Endothelial cell of umbilical vein (primary cell): ENCODE measurements at regions of chr2 and their contacts with region 1.

Region 1: DNA sequence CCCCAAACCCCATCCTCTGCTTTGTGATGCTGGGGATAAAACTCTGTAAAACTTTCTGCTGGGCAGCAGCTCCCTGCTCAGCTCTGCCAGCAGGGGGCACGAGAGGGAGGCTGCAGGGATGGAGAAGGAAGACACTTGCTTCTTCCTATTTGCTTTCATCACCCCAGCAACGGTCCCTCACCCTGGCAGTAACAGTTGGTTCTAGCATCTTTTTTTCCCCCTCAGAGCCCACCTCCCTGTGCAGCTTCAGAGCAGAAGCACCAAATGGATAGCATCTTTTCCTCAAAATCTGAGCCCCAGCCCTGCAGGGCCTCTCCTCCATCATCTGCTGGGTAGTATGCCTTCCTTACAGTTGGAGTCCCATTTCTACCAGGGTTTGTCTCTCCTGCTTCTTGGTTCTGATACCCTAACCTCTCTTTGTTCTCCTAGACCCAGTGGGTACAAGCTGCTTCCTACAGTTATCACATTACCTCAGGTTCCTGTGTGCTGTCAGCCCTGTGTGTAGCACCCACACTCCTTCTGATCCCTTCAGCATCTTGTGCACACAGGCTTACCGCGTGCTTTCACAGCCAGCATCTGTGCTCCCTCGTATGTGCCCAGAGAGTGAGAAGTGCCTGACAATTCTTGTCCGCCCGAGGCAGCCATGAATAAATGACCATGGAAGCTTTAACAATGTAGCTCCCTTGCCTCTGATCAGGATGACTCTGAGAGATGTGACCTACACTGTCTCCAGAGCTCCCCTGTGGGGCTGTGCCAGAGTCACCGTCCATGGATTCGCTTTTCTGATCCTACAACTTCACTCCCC is 14.5 kb downstream of the CKAP2L start:
- DNase-seq: peak; percentile 67
- H3K4me3 ChIP-seq: no peak overlapping the region
- H3K27ac ChIP-seq: peak overlapping the region; percentile 28
- H3K4me1 ChIP-seq: no peaks in the 10 kb centered on the region
- H3K27me3 ChIP-seq: no peaks in the 10 kb centered on the region
- CTCF ChIP-seq: peak; percentile 91 to 96
- POLR2A ChIP-seq: no peak

Region 2: GRCh38 chr2:112737542-112738232 is 12.3 kb before region 1 on chr2:
- CTCF ChIA-PET with region 1: interaction called, 14 read pairs
- POLR2A ChIA-PET with region 1: no interaction called
- dilution Hi-C with region 1: no loop called
- intact Hi-C with region 1: no loop called
- DNase-seq: no peak
- H3K4me3 ChIP-seq: no peak overlapping the region
- H3K27ac ChIP-seq: no peak overlapping the region
- H3K4me1 ChIP-seq: no peaks in the 10 kb centered on the region
- H3K27me3 ChIP-seq: no peaks in the 10 kb centered on the region
- CTCF ChIP-seq: no peak
- POLR2A ChIP-seq: no peak

Region 3: DNA sequence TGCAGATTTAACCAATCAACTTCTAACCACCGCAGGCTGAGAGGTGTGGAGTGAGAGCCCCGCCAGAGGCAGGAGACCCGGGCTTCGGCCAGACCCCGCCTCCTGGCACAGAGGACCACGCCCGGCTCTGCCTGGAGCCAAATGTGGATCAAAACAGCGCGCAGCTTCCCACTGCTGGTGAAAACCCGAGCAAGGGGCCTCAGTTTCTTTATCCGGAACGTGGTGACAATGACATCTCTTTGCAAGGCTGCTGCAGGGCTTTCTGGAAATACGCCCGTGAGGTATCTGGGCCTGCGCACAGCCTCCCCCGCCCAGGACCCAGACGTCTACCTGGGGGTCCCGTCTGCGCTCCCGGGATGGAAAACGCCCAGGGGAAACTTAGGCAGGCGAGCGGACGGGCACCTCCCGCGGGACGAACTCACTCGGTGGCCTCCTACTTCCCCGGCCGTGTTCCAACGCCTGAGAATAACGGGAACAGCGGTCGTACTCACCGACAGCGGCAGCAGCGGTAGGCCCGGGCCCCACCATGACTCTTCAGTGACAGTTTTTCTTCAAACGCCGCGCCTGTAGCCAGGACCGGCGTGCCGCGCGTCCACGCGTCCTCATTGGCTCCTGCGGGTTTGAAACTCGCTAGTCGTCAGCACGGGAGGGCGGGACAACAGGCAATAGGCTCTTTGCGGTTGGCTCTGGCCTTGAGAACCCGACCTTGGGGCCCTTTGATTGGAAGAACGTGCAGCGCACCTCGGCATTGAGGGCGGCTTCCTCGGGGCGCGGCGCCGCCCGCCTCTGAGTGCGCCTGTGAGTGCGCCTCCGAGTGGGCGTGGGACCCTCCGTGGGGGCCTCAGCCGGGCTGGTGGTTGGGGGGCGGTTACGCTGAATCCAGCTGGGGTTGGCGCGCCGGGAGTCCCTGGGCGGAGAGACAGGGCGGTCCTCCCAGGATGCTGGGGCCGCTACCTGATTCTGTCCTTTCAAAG is 14.4 kb after region 1 on chr2 and contains the start of gene CKAP2L:
- CTCF ChIA-PET with region 1: interaction called, 27 read pairs
- POLR2A ChIA-PET with region 1: no interaction called
- dilution Hi-C with region 1: no loop called
- intact Hi-C with region 1: loop called (anchors 2 kb)
- DNase-seq: peak; percentile 98
- H3K4me3 ChIP-seq: peak within 1 kb of the TSS; percentile 78 to 90 (median 87)
- H3K27ac ChIP-seq: peak within 1 kb of the TSS; percentile 34
- H3K4me1 ChIP-seq: peaks cover 21% of the 10 kb centered on the region
- H3K27me3 ChIP-seq: no peaks in the 10 kb centered on the region
- CTCF ChIP-seq: no peak
- POLR2A ChIP-seq: peak; percentile 52
- total RNA-seq, gene CKAP2L: 25.2 and 30.7 TPM in 2 replicates

Region 4: DNA sequence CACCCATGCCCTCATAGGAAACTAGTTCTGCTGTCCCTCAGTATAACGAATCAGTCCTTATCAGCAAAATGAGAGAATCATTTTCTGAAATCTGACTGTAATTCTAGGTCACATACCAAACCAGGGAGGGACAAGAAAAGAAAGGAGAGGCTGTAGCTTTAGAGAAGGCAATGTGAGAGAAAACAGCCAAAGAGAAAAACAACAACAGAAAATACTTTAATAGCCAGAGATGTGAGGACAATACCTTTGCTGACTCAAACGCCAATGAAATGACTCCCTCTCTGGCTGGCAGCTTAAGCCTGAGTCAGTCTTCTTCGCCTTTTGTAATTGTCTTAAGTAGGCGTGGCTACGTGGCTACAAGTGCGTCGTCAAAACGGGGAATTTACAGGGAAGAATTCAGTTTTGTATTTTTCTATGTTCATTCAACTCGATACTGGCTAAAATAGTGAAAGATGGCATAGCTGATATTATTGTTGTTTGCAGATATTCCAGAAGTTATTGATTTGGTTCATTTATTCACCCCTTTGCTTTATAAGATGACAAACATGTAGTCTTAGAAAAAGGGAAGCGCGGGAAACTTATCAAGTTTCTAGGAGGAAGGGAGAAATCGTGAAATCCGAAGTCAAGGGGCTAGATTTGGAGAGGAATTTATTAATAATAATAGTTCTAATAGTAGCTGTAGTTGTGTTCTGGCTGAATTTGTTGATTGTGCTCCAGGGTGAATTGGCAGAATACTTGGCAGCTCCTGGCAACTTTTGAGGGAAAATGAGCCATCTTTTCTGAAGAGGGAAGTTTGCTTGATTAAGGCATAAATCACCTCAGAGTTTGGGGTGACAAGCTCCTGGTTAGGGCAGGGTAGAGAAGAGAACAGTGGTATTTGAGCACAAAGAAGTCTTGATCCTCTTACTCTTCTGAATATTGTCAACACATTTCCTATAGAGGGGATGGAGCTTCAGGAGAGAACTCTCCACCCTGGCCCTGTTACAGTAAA is 34.5 kb after region 1 on chr2 and contains the start of gene IL1A:
- CTCF ChIA-PET with region 1: interaction called, 12 read pairs
- POLR2A ChIA-PET with region 1: no interaction called
- dilution Hi-C with region 1: no loop called
- intact Hi-C with region 1: no loop called
- DNase-seq: peak; percentile 73
- H3K4me3 ChIP-seq: peak within 1 kb of the TSS in 1 of 3 experiments; percentile 37
- H3K27ac ChIP-seq: peak within 1 kb of the TSS; percentile 73
- H3K4me1 ChIP-seq: peaks cover 43% of the 10 kb centered on the region
- H3K27me3 ChIP-seq: no peaks in the 10 kb centered on the region
- CTCF ChIP-seq: no peak
- POLR2A ChIP-seq: no peak
- total RNA-seq, gene IL1A: 0.99 and 1.4 TPM in 2 replicates

Region 5: DNA sequence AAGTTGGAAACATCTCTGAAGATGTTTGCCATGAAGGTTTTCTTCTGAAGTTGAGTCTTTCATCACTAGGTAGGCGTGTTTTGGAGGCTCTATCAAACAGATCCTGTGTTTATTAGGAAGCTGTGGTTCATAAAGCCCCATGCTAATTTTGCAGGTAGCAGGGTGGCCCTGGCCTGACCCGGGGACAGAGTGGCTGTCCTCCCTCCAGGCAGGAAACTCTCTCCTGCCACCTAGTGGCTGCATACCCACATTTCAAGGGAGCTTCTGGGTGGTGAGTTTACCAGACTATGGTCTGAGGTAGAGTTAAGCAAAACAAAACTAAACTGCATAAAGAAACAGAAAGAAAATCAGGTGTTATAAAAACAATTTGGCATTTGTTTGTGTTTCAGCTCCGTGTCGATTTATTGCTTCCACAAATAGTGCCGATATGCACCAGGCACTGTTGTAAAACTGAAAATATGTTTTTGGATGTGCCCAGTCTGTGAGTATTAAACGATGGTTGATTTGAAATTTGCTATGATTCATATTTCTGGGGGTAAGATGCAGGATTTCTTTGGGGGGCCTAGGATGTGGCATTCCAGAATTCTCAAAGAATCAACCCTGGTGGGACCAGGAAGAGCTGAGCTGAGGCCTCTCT is 135.0 kb after region 1 on chr2:
- CTCF ChIA-PET with region 1: interaction called, 218 read pairs
- POLR2A ChIA-PET with region 1: no interaction called
- dilution Hi-C with region 1: no loop called
- intact Hi-C with region 1: loop called (anchors 1 kb)
- DNase-seq: peak; percentile 38
- H3K4me3 ChIP-seq: no peak overlapping the region
- H3K27ac ChIP-seq: no peak overlapping the region
- H3K4me1 ChIP-seq: peaks cover 19% of the 10 kb centered on the region
- H3K27me3 ChIP-seq: no peaks in the 10 kb centered on the region
- CTCF ChIP-seq: peak; percentile 59 to 74
- POLR2A ChIP-seq: no peak

Region 6: GRCh38 chr2:112958428-112959108 is 208.6 kb after region 1 on chr2:
- CTCF ChIA-PET with region 1: interaction called, 39 read pairs
- POLR2A ChIA-PET with region 1: no interaction called
- dilution Hi-C with region 1: no loop called
- intact Hi-C with region 1: no loop called
- DNase-seq: peak; percentile 51
- H3K4me3 ChIP-seq: no peak overlapping the region
- H3K27ac ChIP-seq: no peak overlapping the region
- H3K4me1 ChIP-seq: no peaks in the 10 kb centered on the region
- H3K27me3 ChIP-seq: peaks cover 15 to 20% of the 10 kb centered on the region in 2 experiments
- CTCF ChIP-seq: peak; percentile 84 to 90
- POLR2A ChIP-seq: no peak

Region 7: GRCh38 chr2:113282747-113283533 is 533.0 kb after region 1 on chr2:
- CTCF ChIA-PET with region 1: no interaction called
- POLR2A ChIA-PET with region 1: no interaction called
- dilution Hi-C with region 1: no loop called
- intact Hi-C with region 1: no loop called
- DNase-seq: no peak
- H3K4me3 ChIP-seq: no peak overlapping the region
- H3K27ac ChIP-seq: no peak overlapping the region
- H3K4me1 ChIP-seq: no peaks in the 10 kb centered on the region
- H3K27me3 ChIP-seq: peaks cover 25 to 27% of the 10 kb centered on the region in 2 experiments
- CTCF ChIP-seq: no peak
- POLR2A ChIP-seq: no peak